ENCODE measurements at regions of chr5 and their contacts with region 1.

Region 1: DNA sequence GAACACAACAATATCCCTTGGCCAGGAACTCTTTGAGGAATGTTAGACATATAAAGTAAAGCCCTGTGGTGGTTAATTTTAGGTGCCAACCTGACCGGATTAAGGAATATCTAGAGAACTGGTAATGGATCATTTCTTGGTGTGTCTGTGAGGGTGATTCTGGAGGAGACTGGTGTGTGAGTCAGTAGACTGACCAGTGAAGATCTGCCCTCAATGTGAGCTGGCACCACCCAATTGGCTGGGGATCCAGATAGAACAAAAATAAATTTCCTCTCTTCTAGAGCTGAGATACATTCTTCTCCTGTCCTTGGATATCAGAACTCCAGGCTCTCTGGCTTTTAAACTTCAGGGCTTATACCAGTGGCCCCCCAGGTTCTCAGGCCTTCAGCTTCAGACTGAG is 56.2 kb upstream of the TNPO1 start:
- DNase-seq: no peak
- ATAC-seq: no peak
- H3K4me3 ChIP-seq: no peak overlapping the region
- H3K27ac ChIP-seq: no peak overlapping the region
- H3K4me1 ChIP-seq: no peaks in the 10 kb centered on the region
- H3K27me3 ChIP-seq: 0 out of 5 replicates have a peak, but pooled peaks cover 2 to 5% of the 10 kb centered on the region in 2 experiments
- CTCF ChIP-seq: no peak
- EP300 ChIP-seq: no peak
- POLR2A ChIP-seq: no peak
- RAD21 ChIP-seq: no peak

Region 2: DNA sequence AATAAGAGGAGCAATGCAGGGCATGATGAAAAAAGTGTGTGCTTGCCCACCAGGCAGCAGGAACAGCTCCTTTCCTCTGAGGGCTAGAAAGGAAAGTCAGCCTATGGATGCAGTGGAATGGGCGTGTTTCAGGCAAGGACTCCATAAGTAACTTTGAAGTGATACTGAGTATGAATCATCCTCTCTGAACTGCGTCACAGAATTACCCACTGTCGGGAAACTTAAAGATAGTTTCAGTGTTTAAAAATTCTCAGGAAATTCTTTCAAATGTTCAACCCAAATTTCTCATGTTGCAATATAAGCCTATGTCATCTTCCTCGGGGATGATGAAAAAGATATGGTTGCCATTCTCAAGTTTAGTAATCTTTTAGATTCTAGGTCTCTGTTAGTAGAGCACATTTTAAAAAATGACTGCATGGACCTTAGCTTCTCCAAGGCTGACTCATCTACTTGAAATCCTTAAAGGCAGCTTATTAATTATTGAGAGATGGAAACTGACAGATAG is 412.4 kb before region 1 on chr5:
- CTCF ChIA-PET with region 1: no interaction called
- POLR2A ChIA-PET with region 1: no interaction called
- in situ Hi-C with region 1: no loop called
- intact Hi-C with region 1: no loop called
- DNase-seq: no peak
- ATAC-seq: no peak
- H3K4me3 ChIP-seq: no peak overlapping the region
- H3K27ac ChIP-seq: no peak overlapping the region
- H3K4me1 ChIP-seq: no peaks in the 10 kb centered on the region
- H3K27me3 ChIP-seq: no peaks in the 10 kb centered on the region
- CTCF ChIP-seq: no peak
- EP300 ChIP-seq: no peak
- POLR2A ChIP-seq: no peak
- RAD21 ChIP-seq: no peak

Region 3: DNA sequence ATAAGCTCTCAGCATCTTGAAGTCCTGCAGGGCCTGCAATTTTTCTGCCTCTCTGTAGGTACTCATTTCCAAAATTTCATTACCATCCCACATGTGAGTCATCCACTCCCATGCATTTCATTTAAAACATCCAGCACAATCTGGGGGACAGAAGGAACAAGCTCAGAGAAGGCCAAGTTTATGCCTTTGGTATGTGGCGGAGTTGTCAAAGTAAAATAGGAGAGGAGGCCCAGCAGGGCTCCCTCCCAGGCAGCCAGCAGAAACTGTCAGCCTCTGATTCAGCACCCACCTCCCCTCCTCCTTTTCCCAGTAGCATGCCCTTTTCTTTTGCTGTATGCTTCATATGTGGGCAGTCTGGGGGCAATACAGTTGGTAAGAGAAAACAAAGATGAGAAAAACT is 126.6 kb before region 1 on chr5:
- CTCF ChIA-PET with region 1: no interaction called
- POLR2A ChIA-PET with region 1: no interaction called
- in situ Hi-C with region 1: no loop called
- intact Hi-C with region 1: no loop called
- DNase-seq: peak in 1 of 4 experiments; percentile 26
- ATAC-seq: peak; percentile 60
- H3K4me3 ChIP-seq: no peak overlapping the region
- H3K27ac ChIP-seq: no peak overlapping the region
- H3K4me1 ChIP-seq: peaks cover 11 to 19% of the 10 kb centered on the region in 2 experiments; a peak in 3 of 5 replicates
- H3K27me3 ChIP-seq: no peaks in the 10 kb centered on the region
- CTCF ChIP-seq: no peak
- EP300 ChIP-seq: no peak
- POLR2A ChIP-seq: no peak
- RAD21 ChIP-seq: no peak

Region 4: GRCh38 chr5:72829707-72830106 is 69.4 kb after region 1 on chr5:
- CTCF ChIA-PET with region 1: no interaction called
- POLR2A ChIA-PET with region 1: no interaction called
- in situ Hi-C with region 1: loop called (anchors 5 kb)
- intact Hi-C with region 1: no loop called
- DNase-seq: no peak
- ATAC-seq: no peak
- H3K4me3 ChIP-seq: no peak overlapping the region
- H3K27ac ChIP-seq: no peak overlapping the region
- H3K4me1 ChIP-seq: no peaks in the 10 kb centered on the region
- H3K27me3 ChIP-seq: no peaks in the 10 kb centered on the region
- CTCF ChIP-seq: no peak
- EP300 ChIP-seq: no peak
- POLR2A ChIP-seq: no peak
- RAD21 ChIP-seq: no peak